ENCODE measurements at regions of chr1 and their contacts with region 1.

Region 1: DNA sequence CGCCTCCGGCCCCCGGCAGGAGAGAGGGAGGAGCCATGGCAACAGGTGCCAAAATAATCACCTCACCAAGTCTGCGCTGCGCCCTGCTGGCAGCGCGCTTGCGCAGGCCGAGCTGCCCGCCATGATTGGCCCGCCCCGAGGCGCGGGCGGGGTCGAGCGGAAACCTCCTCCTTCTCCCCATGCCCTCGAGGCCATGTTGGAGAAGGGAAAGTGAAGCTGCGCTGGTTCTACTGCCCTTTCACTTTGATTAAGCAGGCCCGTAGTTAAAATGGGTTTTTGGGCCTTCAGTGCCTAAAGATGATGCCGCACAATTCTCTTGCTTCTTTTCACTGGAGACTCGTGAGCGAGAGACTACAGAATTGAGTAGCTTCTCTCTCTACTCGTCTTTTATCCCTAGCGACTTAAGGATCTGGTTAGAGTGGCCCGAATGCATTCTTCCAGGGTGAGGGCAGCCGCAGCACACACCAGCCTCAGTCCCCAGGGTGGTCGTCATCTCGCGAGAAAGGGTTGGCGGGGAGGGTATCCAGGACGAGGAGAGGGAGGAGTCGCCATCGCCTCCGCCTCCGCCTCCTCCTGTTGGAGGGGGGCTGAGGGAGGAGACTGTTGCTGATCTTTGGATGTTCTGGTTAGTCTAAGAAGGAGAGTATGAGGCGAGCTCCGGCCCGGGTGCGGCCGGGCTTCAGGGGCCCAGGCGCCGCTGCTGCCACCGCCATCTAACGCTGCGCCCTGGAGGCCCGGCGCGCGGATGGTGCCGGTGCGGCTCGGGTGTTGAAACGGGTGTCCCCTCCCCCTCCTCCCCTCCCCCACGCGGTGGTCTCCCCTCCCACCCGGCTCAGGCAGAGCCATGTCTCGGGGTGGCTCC is at the start of gene DCAF6:
- DNase-seq: peak; percentile 100
- H3K4me3 ChIP-seq: peak within 1 kb of the TSS; percentile 76 to 91 (median 82)
- H3K27ac ChIP-seq: peak within 1 kb of the TSS; percentile 91 to 97 (median 96)
- H3K4me1 ChIP-seq: peaks cover 27 to 69% (median 42%) of the 10 kb centered on the region in 6 donors
- H3K27me3 ChIP-seq: no peaks in the 10 kb centered on the region
- CTCF ChIP-seq: peak in 5 of 11 experiments; percentile 9 to 35 (median 21)
- POLR2A ChIP-seq: peak; percentile 65 to 91 (median 78)
- total RNA-seq, gene DCAF6: 38.7 to 76.6 (median 48.1) TPM

Region 2: GRCh38 chr1:167715157-167715999 is 220.9 kb before region 1 on chr1:
- intact Hi-C with region 1: loop called (anchors 10 kb)
- DNase-seq: peak; percentile 87
- H3K4me3 ChIP-seq: peak overlapping the region; percentile 56 to 92 (median 78)
- H3K27ac ChIP-seq: peak overlapping the region; percentile 53 to 88 (median 85)
- H3K4me1 ChIP-seq: peaks cover 0 to 61% (median 34%) of the 10 kb centered on the region in 6 donors
- H3K27me3 ChIP-seq: no peaks in the 10 kb centered on the region
- CTCF ChIP-seq: peak; percentile 52 to 92 (median 81)
- POLR2A ChIP-seq: no peak

Measured in spleen (tissue), 13 donors.